ENCODE measurements at regions of chr14 and their contacts with region 1.

Region 1: DNA sequence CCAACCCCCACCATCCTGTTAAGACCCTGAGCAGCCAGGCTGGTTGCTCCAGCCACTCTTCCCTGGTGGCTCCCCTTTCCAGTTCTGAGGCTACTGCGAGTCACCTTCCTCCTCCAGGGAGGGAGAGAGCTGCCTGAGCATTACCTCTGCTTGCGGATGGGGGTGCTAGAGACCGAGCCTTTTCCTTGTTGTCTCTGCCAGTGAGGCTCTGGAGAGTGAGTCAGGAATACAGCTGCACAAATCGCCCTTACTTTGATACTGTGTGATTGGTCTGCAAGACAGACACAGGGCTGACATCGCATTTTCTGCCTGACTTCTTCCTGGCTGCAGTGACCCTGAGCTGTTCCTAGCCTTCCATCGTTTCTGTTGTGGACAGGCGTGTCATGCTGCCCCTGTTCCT is 94.3 kb downstream of the SLC25A47 start:
- DNase-seq: peak; percentile 43 to 86 (median 73)
- H3K4me3 ChIP-seq: no peak overlapping the region
- H3K27ac ChIP-seq: peak overlapping the region in 6 of 59 donors; percentile 14 to 55 (median 40)
- H3K27me3 ChIP-seq: no peaks in the 10 kb centered on the region
- CTCF ChIP-seq: peak in 55 of 56 donors; percentile 48 to 86 (median 74)

Region 2: DNA sequence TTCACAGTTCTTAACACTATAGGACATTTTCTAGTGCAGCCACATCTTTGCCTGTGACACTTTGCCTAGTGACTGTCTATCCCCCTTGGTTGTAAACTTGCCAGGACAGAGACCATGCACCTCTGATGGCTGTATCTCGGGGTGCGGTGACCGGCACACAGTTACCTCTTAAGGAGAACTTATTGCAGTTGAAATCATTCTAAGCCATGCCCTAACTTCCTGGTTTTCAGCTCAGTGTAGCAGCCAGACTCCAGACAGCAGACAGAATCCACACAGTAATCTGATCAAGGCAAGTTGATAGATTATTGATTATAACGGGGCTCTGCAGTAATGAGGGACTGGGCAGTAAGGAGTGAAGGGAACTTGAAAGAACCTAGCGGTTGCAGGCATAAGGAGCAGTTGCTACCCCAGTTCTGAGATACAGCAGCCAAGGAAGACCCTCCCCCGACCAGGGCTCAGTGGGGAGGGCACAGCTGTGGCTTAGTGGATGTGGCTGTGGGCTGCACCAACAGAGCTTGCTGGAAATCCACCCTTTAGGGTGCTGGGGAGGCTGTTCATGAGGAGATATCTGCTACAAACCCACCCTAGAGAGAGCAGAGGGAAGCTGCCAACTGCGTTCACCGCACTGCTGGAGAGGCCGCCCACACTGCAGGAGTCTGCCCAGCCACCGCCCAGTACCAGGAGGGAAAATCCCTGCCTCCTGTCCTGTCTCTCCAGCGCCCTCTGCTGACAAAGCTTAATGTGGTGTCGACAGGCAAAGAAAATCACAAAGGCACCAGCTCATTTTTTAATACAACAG is 227.9 kb after region 1 on chr14:
- intact Hi-C with region 1: loop called (anchors 2 to 10 kb)
- DNase-seq: peak; percentile 53 to 83 (median 82)
- H3K4me3 ChIP-seq: peak overlapping the region in 1 of 59 donors; percentile 25
- H3K27ac ChIP-seq: no peak overlapping the region
- H3K27me3 ChIP-seq: no peaks in the 10 kb centered on the region
- CTCF ChIP-seq: peak; percentile 63 to 90 (median 79)

Region 3: GRCh38 chr14:100662879-100663760 is 245.7 kb after region 1 on chr14:
- intact Hi-C with region 1: no loop called
- DNase-seq: peak in 8 of 10 donors; percentile 57 to 81 (median 70)
- H3K4me3 ChIP-seq: no peak overlapping the region
- H3K27ac ChIP-seq: no peak overlapping the region
- H3K27me3 ChIP-seq: peaks cover 0 to 12% (median 0%) of the 10 kb centered on the region in 45 donors
- CTCF ChIP-seq: peak; percentile 84 to 100 (median 93)

Region 4: DNA sequence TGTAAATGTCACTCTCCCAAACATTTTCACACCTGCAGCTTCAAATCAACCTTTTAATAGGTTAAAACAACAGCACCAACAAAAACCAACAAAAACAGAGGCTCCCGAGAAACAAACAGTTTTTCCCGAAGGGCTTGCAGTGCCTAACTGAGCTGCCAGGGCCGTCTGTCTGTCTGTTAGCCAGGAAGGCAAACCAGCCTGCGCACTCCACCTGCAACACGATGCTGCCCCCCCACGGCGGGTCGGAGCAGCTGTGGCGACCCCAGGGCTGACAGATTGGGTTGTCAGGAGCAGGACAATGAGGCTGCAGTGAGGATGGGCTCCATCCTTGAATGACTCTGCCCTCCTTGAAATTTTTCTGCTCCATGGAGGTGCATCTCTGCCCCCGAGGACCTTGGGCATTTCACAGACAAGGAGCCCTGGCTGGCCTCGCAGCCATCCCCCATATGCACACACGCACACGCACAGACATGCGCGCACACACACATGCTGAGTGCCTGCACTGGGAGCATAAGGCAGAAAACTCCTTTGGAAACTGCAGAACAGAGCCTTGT is 483.4 kb after region 1 on chr14:
- intact Hi-C with region 1: loop called in 1 of 2 experiments (anchors 10 kb)
- DNase-seq: peak in 3 of 10 donors; percentile 30 to 39 (median 38)
- H3K4me3 ChIP-seq: peak overlapping the region in 1 of 59 donors; percentile 2
- H3K27ac ChIP-seq: peak overlapping the region in 2 of 59 donors; percentile 13 to 28
- H3K27me3 ChIP-seq: peaks cover 0 to 81% (median 31%) of the 10 kb centered on the region in 45 donors
- CTCF ChIP-seq: peak in 44 of 56 donors; percentile 9 to 60 (median 35)

Measured in dorsolateral prefrontal cortex (tissue), 120 donors.